ENCODE measurements at regions of chr13 and their contacts with region 1.

Region 1: GRCh38 chr13:30617315-30618185 is at the start of gene USPL1:
- DNase-seq: peak; percentile 94
- ATAC-seq: peak; percentile 93
- H3K4me3 ChIP-seq: peak within 1 kb of the TSS; percentile 72 to 89 (median 81)
- H3K27ac ChIP-seq: peak within 1 kb of the TSS; percentile 99
- H3K4me1 ChIP-seq: peaks cover 34% of the 10 kb centered on the region
- H3K27me3 ChIP-seq: no peaks in the 10 kb centered on the region; a peak in 1 of 5 replicates
- CTCF ChIP-seq: peak; percentile 58
- EP300 ChIP-seq: peak; percentile 22 to 91; a peak in 3 of 4 replicates
- POLR2A ChIP-seq: peak in 1 of 2 experiments; percentile 90
- RAD21 ChIP-seq: peak; percentile 61
- total RNA-seq, gene USPL1: 13.7 and 18.3 TPM in 2 replicates

Region 2: DNA sequence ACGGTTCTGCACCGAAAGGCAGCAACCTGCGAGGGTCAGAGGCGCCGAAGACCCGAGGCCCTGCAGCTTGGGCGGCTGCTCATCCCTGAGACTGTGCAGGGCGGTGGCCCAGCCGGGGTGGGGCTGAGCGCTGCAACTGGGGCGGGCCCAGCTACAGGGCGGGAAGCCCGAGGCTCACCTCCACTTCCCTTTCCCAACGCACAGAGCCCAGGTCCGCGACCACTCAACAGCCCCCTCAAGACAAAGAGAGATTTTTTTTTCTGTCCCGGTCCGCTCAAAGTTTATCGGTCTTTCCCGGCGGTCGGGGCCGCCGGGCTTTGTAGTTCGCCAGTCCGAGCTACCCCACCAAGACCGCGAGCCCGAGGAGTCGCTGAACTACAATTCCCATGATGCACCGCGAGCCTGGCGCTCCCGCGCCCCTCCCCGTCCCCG is 310.8 kb before region 1 on chr13:
- CTCF ChIA-PET with region 1: no interaction called
- POLR2A ChIA-PET with region 1: interaction called, 11 read pairs
- in situ Hi-C with region 1: no loop called
- intact Hi-C with region 1: no loop called
- DNase-seq: peak; percentile 87
- ATAC-seq: peak; percentile 91
- H3K4me3 ChIP-seq: peak overlapping the region; percentile 81 to 93 (median 88)
- H3K27ac ChIP-seq: peak overlapping the region; percentile 90
- H3K4me1 ChIP-seq: peaks cover 51% of the 10 kb centered on the region
- H3K27me3 ChIP-seq: no peaks in the 10 kb centered on the region; a peak in 1 of 5 replicates
- CTCF ChIP-seq: no peak
- EP300 ChIP-seq: no peak
- POLR2A ChIP-seq: peak; percentile 34 to 51; a peak in 2 of 4 replicates
- RAD21 ChIP-seq: no peak

Region 3: GRCh38 chr13:30465585-30466357 is 151.8 kb before region 1 on chr13 and contains the start of gene HMGB1:
- CTCF ChIA-PET with region 1: no interaction called
- POLR2A ChIA-PET with region 1: interaction called, 11 read pairs
- in situ Hi-C with region 1: no loop called
- intact Hi-C with region 1: loop called (anchors 1 kb)
- DNase-seq: peak; percentile 98
- ATAC-seq: peak; percentile 97
- H3K4me3 ChIP-seq: peak within 1 kb of the TSS; percentile 74 to 92 (median 86)
- H3K27ac ChIP-seq: peak within 1 kb of the TSS; percentile 99
- H3K4me1 ChIP-seq: peaks cover 27% of the 10 kb centered on the region
- H3K27me3 ChIP-seq: no peaks in the 10 kb centered on the region; a peak in 2 of 5 replicates
- CTCF ChIP-seq: no peak
- EP300 ChIP-seq: no peak
- POLR2A ChIP-seq: peak; percentile 85 to 94
- RAD21 ChIP-seq: peak; percentile 46; the same call in 1 of the 2 replicates
- total RNA-seq, gene HMGB1: 584 and 878 TPM in 2 replicates

Region 4: DNA sequence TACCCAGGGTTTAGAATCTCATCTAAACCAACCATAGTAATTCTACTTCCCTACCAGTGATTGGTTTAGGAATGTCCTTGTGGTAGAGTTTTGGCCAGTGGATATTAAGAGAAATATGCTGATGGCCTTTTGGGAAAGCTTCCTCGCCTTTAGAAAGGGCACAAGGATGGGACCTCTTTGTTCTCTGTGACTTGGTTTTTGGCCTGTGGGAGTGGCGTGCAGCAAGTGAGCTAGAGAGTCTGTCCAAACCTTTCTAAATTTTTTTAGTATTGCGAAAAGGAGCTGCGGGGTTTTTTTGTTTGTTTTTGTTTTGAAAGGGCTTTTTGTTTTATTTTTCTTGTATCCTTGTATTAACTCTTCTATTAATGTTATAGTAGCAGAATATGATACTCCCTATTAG is 20.8 kb after region 1 on chr13:
- CTCF ChIA-PET with region 1: no interaction called
- POLR2A ChIA-PET with region 1: no interaction called
- in situ Hi-C with region 1: no loop called
- intact Hi-C with region 1: no loop called
- DNase-seq: no peak
- ATAC-seq: no peak
- H3K4me3 ChIP-seq: no peak overlapping the region
- H3K27ac ChIP-seq: no peak overlapping the region
- H3K4me1 ChIP-seq: peaks cover 13% of the 10 kb centered on the region
- H3K27me3 ChIP-seq: no peaks in the 10 kb centered on the region
- CTCF ChIP-seq: no peak
- EP300 ChIP-seq: no peak
- POLR2A ChIP-seq: no peak
- RAD21 ChIP-seq: no peak

Region 5: DNA sequence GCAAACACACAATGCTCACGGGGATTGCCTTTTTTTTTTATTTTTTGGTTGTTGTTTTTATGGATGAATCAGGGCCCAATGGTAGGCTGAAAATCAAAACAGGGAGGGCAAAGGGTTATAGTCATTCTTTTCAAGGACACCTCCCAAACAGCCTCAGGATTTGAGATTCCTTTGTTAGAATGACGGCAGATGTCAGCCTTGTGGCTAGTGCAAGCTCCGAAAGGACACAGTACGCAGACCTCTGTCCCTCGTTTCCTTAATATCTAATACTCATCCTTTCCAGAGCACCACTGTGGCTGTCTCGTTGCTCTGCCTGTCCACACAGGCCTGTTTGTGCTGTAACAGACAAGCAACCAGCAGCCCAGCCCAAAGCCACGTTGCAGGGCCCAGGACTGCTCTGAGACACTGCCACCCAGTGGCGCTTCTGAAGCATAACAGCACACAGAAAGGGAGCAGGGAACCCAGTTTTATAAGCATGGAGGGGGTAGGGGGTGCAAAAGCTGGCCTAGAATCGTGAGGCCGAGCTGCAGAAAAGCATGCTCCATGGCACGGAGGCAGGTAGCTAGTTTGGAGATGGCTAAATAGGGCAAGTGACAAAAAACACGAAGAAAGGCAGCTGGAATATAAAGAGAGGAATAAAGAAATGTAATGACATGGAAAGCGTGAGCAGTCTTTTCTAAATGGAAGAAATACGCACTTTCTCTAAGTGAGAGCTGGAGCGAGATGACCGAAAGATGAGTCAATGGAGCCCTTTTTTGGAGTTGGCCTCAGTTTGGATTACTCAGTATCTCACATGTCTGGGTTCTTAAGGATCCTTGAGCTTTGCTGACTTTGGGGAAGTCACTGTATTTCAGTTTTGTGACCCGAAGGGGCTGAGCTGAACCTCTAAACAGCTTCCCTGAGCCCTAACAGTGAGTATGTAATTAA is 247.8 kb after region 1 on chr13:
- CTCF ChIA-PET with region 1: no interaction called
- POLR2A ChIA-PET with region 1: interaction called, 3 read pairs
- in situ Hi-C with region 1: no loop called
- intact Hi-C with region 1: loop called (anchors 1 kb)
- DNase-seq: peak; percentile 80
- ATAC-seq: peak; percentile 97
- H3K4me3 ChIP-seq: peak overlapping the region in 2 of 3 experiments; percentile 40 to 54; a peak in 3 of 6 replicates
- H3K27ac ChIP-seq: peak overlapping the region; percentile 7
- H3K4me1 ChIP-seq: peaks cover 64% of the 10 kb centered on the region
- H3K27me3 ChIP-seq: no peaks in the 10 kb centered on the region; a peak in 1 of 5 replicates
- CTCF ChIP-seq: peak; percentile 97
- EP300 ChIP-seq: no peak
- POLR2A ChIP-seq: peak in 1 of 2 experiments; percentile 21; a peak in 1 of 4 replicates
- RAD21 ChIP-seq: peak; percentile 93

Measured in HepG2 (cell line).